ENCODE measurements at regions of chr5 and their contacts with region 1.

Region 1: DNA sequence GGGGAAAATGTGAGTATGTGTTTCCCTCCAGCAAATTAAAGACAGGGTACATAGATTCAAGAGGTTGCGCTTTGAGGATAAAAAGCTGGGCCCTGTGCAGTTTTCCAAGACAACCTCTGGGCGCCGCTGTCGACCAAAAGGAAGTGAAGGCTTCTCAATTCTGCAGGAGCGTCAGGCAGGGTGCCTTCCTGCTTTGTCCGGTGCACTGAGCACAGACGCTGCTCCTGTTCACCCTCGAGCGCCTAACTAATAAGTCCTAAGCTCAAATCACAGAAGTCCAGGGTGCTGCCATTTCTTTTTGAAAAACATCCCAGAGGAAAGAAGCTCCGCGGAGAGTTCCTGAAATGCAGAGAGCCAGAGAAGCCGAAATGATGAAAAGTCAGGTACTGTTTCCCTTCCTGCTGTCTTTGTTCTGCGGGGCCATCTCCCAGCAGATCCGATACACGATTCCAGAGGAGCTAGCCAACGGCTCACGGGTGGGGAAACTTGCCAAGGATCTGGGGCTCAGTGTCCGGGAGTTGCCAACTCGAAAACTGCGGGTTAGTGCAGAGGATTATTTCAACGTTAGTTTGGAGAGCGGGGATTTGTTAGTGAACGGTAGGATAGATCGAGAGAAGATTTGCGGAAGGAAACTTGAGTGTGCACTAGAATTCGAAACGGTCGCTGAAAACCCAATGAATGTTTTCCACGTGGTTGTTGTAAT is at the start of gene PCDHGB1:
- DNase-seq: peak; percentile 52 to 60
- ATAC-seq: peak; percentile 50 to 88 (median 72)
- H3K4me3 ChIP-seq: peak within 1 kb of the TSS in 8 of 10 donors; percentile 1 to 34 (median 26)
- H3K27ac ChIP-seq: peak within 1 kb of the TSS in 1 of 10 donors; percentile 5
- H3K4me1 ChIP-seq: peaks cover 0 to 36% (median 4%) of the 10 kb centered on the region in 9 donors
- H3K27me3 ChIP-seq: peaks cover 0 to 29% (median 0%) of the 10 kb centered on the region in 7 donors
- CTCF ChIP-seq: peak in 8 of 9 donors; percentile 21 to 62 (median 54)
- total RNA-seq, gene PCDHGB1: 5.2 to 13.2 (median 9.0) TPM

Region 2: DNA sequence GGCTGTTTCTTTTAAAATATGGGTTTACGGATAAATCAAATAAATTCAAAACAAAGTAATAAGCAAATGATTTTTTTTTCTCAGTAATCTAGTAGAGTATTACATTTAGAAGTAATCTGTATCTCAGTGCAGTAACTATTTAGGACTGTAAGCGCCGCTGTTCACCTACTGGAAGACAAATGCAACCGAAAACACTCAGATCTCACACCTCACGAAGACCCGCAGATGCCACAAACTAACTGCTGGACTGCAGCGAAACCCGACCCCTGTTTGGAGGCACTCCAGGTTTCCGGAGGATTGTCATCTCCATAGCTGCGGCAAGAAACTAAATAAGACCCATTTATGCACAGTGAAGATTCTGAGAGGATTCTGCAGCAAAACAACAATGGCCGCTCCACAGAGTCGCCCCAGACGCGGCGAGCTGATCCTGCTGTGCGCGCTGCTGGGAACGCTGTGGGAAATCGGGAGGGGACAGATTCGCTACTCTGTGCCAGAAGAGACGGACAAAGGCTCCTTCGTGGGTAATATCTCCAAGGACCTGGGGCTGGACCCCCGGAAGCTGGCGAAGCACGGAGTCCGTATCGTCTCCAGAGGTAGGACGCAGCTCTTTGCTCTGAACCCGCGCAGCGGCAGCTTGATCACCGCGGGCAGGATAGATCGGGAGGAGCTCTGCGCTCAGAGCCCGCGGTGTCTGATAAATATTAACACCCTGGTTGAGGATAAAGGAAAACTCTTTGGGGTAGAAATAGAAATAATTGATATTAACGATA is 42.5 kb after region 1 on chr5 and contains the start of gene PCDHGA8:
- intact Hi-C with region 1: loop called in 1 of 10 experiments (anchors 5 kb)
- DNase-seq: no peak
- ATAC-seq: no peak
- H3K4me3 ChIP-seq: no peak within 1 kb of the TSS
- H3K27ac ChIP-seq: no peak within 1 kb of the TSS
- H3K4me1 ChIP-seq: peaks cover 0 to 8% (median 0%) of the 10 kb centered on the region in 9 donors
- H3K27me3 ChIP-seq: peaks cover 0 to 72% (median 0%) of the 10 kb centered on the region in 7 donors
- CTCF ChIP-seq: peak in 4 of 9 donors; percentile 21 to 31 (median 27)
- total RNA-seq, gene PCDHGA8: 7.2 to 11.2 (median 8.7) TPM

Region 3: DNA sequence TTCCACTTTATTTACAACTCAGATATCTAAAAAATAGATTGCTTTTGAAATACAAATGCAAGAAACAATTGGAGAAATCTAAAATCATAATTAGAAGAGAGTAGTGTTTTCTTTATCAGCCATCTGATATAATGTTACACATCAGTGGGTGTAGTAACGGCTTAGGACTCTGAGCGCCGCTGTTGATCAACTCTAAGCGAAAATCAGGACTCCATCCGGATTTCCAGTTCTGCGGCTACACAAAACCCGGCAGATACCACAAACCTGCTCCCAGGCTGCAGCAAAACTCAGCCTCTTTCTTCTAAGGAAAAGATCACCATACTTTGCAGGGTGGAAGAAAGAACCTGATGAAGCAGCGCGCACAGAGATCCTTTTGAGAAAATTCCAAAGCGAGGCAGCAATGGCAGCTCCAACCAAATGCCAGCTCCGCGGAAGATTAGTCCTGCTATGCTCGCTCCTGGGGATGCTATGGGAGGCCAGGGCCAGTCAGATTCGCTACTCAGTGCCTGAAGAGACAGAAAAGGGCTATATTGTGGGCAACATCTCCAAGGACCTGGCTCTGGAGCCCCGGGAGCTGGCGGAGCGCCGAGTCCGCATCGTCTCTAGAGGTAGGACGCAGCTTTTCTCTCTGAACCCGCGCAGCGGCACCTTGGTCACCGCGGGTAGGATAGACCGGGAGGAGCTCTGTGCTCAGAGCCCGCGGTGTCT is 52.6 kb after region 1 on chr5 and contains the start of gene PCDHGA9:
- intact Hi-C with region 1: loop called in 1 of 10 experiments (anchors 10 kb)
- DNase-seq: no peak
- ATAC-seq: no peak
- H3K4me3 ChIP-seq: peak within 1 kb of the TSS in 5 of 10 donors; percentile 10 to 32 (median 21)
- H3K27ac ChIP-seq: no peak within 1 kb of the TSS
- H3K4me1 ChIP-seq: peaks cover 0 to 5% (median 0%) of the 10 kb centered on the region in 9 donors
- H3K27me3 ChIP-seq: peaks cover 0 to 85% (median 0%) of the 10 kb centered on the region in 7 donors
- CTCF ChIP-seq: peak in 6 of 9 donors; percentile 6 to 36 (median 22)
- total RNA-seq, gene PCDHGA9: 4.0 to 8.3 (median 6.0) TPM